Common myeloid progenitor, CD34-positive (primary cell): ENCODE measurements at regions of chr13 and their contacts with region 1.

Region 1: DNA sequence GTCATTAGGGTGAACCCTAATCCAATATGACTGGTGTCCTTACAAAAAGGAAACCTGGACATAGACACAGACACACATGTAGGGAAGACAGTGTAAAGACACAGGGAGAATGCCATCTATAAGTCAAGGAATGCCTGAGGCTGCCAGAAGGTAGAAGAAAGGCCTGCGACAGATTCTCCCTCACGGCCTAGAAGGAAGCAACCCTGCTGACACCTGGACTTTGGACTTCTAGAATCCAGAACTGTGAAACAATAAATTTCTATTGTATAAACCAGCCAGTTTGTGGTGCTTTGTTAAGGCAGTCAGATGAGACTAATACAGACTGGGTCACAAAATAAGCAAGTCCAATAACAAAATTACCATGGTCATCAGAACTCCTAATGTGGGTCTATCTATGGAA is 120.4 kb downstream of the ENOX1 start:
- DNase-seq: no peak
- H3K4me3 ChIP-seq: no peak overlapping the region
- H3K27ac ChIP-seq: no peak overlapping the region
- H3K4me1 ChIP-seq: peaks cover 0 to 10% (median 7%) of the 10 kb centered on the region in 4 experiments
- H3K27me3 ChIP-seq: no peaks in the 10 kb centered on the region

Region 2: GRCh38 chr13:43596924-43597598 is 69.3 kb before region 1 on chr13:
- CTCF ChIA-PET with region 1: no interaction called
- POLR2A ChIA-PET with region 1: interaction called, 11 read pairs
- DNase-seq: no peak
- H3K4me3 ChIP-seq: no peak overlapping the region
- H3K27ac ChIP-seq: no peak overlapping the region
- H3K4me1 ChIP-seq: peaks cover 0 to 6% (median 0%) of the 10 kb centered on the region in 4 experiments
- H3K27me3 ChIP-seq: no peaks in the 10 kb centered on the region

Region 3: GRCh38 chr13:43648733-43649132 is 17.7 kb before region 1 on chr13:
- CTCF ChIA-PET with region 1: no interaction called
- POLR2A ChIA-PET with region 1: no interaction called
- DNase-seq: peak in 1 of 3 donors; percentile 12
- H3K4me3 ChIP-seq: no peak overlapping the region
- H3K27ac ChIP-seq: no peak overlapping the region
- H3K4me1 ChIP-seq: no peaks in the 10 kb centered on the region
- H3K27me3 ChIP-seq: no peaks in the 10 kb centered on the region